Activated B cell treated with CpG ODN at 0.5 μM for 24 hours (primary cell): ENCODE measurements at regions of chr2 and their contacts with region 1.

Region 1: DNA sequence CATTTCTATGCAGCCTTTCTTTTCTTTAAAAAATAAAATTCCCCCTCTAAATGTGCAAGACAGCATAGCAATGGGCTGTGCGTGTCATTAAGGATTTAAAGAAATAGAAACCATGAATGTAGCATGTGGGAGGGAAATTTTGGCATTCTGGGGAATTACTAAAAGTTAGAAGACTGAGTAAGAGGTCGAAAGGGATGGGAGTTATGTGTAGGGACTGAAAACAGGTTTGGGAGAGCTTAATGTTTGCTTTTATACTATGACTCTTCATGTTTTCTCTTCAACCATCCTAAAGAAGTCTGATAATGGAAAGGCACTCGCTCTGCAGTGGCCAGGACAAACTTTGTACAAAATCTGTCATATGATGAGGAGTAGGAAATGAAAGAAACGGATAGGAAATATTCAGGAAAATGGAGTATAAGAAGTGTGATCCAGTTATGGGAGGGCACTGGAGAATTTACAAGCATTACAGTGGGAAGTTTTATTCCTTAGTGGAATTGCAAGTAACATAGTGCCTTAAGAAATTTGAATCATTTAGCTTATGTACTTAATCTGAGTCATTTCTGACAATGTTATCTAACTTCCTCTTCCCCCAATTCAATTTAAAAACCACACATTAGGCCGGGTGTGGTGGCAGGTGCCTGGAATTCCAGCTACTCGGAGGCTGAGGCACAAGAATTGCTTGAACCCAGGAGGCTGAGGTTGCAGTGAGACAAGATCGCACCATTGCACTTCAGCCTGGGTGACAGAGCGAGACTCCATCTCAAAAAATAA is 20.6 kb downstream of the TMEM87B start:
- DNase-seq: no peak
- ATAC-seq: peak; percentile 37
- H3K4me3 Mint-ChIP-seq: no peak overlapping the region
- H3K27ac Mint-ChIP-seq: peak overlapping the region; percentile 30
- H3K4me1 Mint-ChIP-seq: peaks cover 27% of the 10 kb centered on the region
- H3K27me3 Mint-ChIP-seq: no peaks in the 10 kb centered on the region
- CTCF ChIP-seq: no peak

Region 2: DNA sequence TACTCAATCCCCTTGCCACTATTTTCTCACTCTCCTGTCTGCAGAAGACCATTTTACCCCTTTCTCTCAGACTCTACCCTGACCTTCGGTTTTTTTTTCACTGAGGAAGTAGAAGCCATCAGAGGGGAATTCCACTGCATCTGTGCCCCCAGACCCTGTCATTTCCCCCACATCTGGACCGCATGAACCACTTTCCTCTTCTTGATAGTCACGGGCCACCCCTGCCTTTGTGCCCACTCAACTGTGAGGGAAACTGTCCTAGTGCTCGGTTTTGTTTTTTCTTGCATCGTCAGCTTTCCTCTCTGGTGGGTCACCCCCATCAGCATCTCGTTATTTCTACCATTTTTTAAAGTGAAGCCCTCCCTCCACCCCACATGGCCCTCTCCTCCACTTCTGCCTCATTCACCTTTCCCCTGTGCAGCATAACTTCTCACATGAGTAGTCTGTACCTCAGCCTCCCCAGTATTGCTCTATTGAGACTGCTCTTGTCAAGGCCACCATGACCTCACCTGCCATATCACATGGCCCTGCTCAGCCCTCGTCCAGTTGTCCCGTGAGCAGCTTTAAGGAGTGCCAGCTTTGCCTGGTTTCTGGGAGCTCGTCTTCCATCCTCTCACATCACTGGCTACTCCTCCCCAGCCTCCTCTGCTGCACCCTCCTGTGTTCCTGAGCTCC is 11.8 kb after region 1 on chr2:
- CTCF ChIA-PET with region 1: no interaction called
- POLR2A ChIA-PET with region 1: interaction called, 11 read pairs
- intact Hi-C with region 1: no loop called
- DNase-seq: peak; percentile 36
- ATAC-seq: peak; percentile 96
- H3K4me3 Mint-ChIP-seq: peak overlapping the region; percentile 69
- H3K27ac Mint-ChIP-seq: peak overlapping the region; percentile 94
- H3K4me1 Mint-ChIP-seq: peaks cover 30% of the 10 kb centered on the region
- H3K27me3 Mint-ChIP-seq: no peaks in the 10 kb centered on the region
- CTCF ChIP-seq: no peak

Region 3: GRCh38 chr2:112910219-112910618 is 834.5 kb after region 1 on chr2:
- CTCF ChIA-PET with region 1: no interaction called
- POLR2A ChIA-PET with region 1: no interaction called
- intact Hi-C with region 1: no loop called
- DNase-seq: no peak
- ATAC-seq: no peak
- H3K4me3 Mint-ChIP-seq: no peak overlapping the region
- H3K27ac Mint-ChIP-seq: no peak overlapping the region
- H3K4me1 Mint-ChIP-seq: no peaks in the 10 kb centered on the region
- H3K27me3 Mint-ChIP-seq: no peaks in the 10 kb centered on the region
- CTCF ChIP-seq: no peak